HCT116 (cell line): ENCODE measurements at regions of chr7 and their contacts with region 1.

Region 1: GRCh38 chr7:12638851-12639467 is 48.5 kb upstream of the ARL4A start:
- DNase-seq: peak; percentile 36
- ATAC-seq: peak; percentile 70
- H3K4me3 ChIP-seq: no peak overlapping the region
- H3K27ac ChIP-seq: no peak overlapping the region
- H3K4me1 ChIP-seq: peaks cover 0 to 7% of the 10 kb centered on the region in 2 experiments; a peak in 2 of 4 replicates
- H3K27me3 ChIP-seq: no peaks in the 10 kb centered on the region
- CTCF ChIP-seq: peak; percentile 33 to 70 (median 66); a peak in 5 of 6 replicates
- POLR2A ChIP-seq: no peak
- RAD21 ChIP-seq: peak; percentile 81

Region 2: GRCh38 chr7:11237742-11238141 is 1401.2 kb before region 1 on chr7:
- CTCF ChIA-PET with region 1: no interaction called
- POLR2A ChIA-PET with region 1: no interaction called
- RAD21 ChIA-PET with region 1: no interaction called
- intact Hi-C with region 1: no loop called
- DNase-seq: no peak
- ATAC-seq: peak; percentile 30; the same call in 1 of the 2 replicates
- H3K4me3 ChIP-seq: peak overlapping the region; percentile 12 to 42; a peak in 2 of 4 replicates
- H3K27ac ChIP-seq: no peak overlapping the region
- H3K4me1 ChIP-seq: no peaks in the 10 kb centered on the region
- H3K27me3 ChIP-seq: no peaks in the 10 kb centered on the region
- CTCF ChIP-seq: no peak
- POLR2A ChIP-seq: no peak
- RAD21 ChIP-seq: no peak

Region 3: GRCh38 chr7:11567571-11567970 is 1071.4 kb before region 1 on chr7:
- CTCF ChIA-PET with region 1: no interaction called
- POLR2A ChIA-PET with region 1: no interaction called
- RAD21 ChIA-PET with region 1: no interaction called
- intact Hi-C with region 1: no loop called
- DNase-seq: no peak
- ATAC-seq: no peak
- H3K4me3 ChIP-seq: no peak overlapping the region
- H3K27ac ChIP-seq: no peak overlapping the region
- H3K4me1 ChIP-seq: no peaks in the 10 kb centered on the region
- H3K27me3 ChIP-seq: no peaks in the 10 kb centered on the region
- CTCF ChIP-seq: no peak
- POLR2A ChIP-seq: no peak
- RAD21 ChIP-seq: no peak

Region 4: DNA sequence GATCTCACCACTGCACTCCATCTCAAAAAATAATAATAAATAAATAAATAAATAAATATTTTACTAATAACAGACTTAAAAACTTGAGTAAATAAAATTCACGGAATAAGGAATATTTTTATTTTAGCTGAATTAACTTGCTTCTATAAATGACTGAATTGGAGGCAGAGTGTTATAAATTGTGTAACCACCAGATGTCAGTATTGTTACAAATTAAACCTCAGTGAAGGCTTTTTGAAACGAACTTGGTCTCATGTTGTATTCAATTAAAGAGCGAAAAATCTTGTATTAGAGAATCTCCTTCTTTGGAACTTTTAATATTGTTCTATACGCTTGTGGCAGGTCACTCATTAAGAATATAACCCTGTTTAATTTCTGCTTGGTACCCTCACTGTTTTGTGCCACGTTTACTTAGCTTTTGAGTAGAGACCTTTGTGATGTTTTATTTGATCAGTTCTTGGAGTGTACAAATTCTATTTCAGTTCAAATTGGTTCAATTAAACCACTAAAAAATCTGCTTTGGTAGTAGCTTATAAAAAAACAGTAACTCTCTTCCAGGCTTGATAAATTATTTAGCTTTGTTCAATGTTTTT is 114.1 kb before region 1 on chr7:
- CTCF ChIA-PET with region 1: interaction called, 16 read pairs
- POLR2A ChIA-PET with region 1: no interaction called
- RAD21 ChIA-PET with region 1: no interaction called
- intact Hi-C with region 1: no loop called
- DNase-seq: peak; percentile 60
- ATAC-seq: peak; percentile 61
- H3K4me3 ChIP-seq: no peak overlapping the region
- H3K27ac ChIP-seq: no peak overlapping the region
- H3K4me1 ChIP-seq: peaks cover 0 to 4% of the 10 kb centered on the region in 2 experiments; a peak in 1 of 4 replicates
- H3K27me3 ChIP-seq: no peaks in the 10 kb centered on the region
- CTCF ChIP-seq: peak; percentile 38 to 73 (median 63); a peak in 5 of 6 replicates
- POLR2A ChIP-seq: no peak
- RAD21 ChIP-seq: peak; percentile 81

Region 5: DNA sequence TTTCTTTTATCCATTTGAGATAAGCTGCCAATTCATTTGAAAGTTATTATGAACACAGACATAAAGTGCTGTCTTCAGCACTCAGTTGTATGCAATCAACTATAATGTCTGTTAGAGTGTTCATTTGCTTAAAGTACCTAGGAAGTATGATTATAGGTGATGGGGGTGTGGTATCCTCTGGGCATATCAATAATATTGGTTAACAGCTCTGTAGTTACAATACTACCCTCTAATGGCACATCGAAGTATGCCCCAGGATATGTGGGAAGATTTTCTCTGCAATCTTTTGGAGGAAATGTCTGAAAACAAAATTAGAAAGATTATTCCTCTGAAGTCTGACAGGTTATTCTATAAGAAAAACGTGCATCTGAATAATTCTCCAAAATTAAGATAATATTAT is 478.1 kb after region 1 on chr7:
- CTCF ChIA-PET with region 1: no interaction called
- POLR2A ChIA-PET with region 1: no interaction called
- RAD21 ChIA-PET with region 1: no interaction called
- intact Hi-C with region 1: loop called (anchors 5 kb)
- DNase-seq: peak; percentile 18
- ATAC-seq: peak; percentile 80
- H3K4me3 ChIP-seq: no peak overlapping the region
- H3K27ac ChIP-seq: no peak overlapping the region
- H3K4me1 ChIP-seq: peaks cover 0 to 11% of the 10 kb centered on the region in 2 experiments; a peak in 1 of 4 replicates
- H3K27me3 ChIP-seq: no peaks in the 10 kb centered on the region
- CTCF ChIP-seq: peak; percentile 59 to 72 (median 67); a peak in 5 of 6 replicates
- POLR2A ChIP-seq: no peak
- RAD21 ChIP-seq: peak; percentile 89